PC-9 (cell line): ENCODE measurements at regions of chr10 and their contacts with region 1.

Region 1: GRCh38 chr10:31393844-31394243 is 74.8 kb downstream of the ZEB1 start:
- DNase-seq: no peak
- H3K4me3 ChIP-seq: no peak overlapping the region
- H3K27ac ChIP-seq: no peak overlapping the region
- H3K4me1 ChIP-seq: no peaks in the 10 kb centered on the region
- H3K27me3 ChIP-seq: no peaks in the 10 kb centered on the region
- CTCF ChIP-seq: no peak

Region 2: GRCh38 chr10:31647861-31648260 is 254.0 kb after region 1 on chr10:
- CTCF ChIA-PET with region 1: no interaction called
- POLR2A ChIA-PET with region 1: interaction called, 10 read pairs
- intact Hi-C with region 1: no loop called
- DNase-seq: no peak
- H3K4me3 ChIP-seq: no peak overlapping the region
- H3K27ac ChIP-seq: no peak overlapping the region
- H3K4me1 ChIP-seq: no peaks in the 10 kb centered on the region
- H3K27me3 ChIP-seq: no peaks in the 10 kb centered on the region
- CTCF ChIP-seq: no peak